MCF 10A (cell line): ENCODE measurements at regions of chr5 and their contacts with region 1.

Region 1: DNA sequence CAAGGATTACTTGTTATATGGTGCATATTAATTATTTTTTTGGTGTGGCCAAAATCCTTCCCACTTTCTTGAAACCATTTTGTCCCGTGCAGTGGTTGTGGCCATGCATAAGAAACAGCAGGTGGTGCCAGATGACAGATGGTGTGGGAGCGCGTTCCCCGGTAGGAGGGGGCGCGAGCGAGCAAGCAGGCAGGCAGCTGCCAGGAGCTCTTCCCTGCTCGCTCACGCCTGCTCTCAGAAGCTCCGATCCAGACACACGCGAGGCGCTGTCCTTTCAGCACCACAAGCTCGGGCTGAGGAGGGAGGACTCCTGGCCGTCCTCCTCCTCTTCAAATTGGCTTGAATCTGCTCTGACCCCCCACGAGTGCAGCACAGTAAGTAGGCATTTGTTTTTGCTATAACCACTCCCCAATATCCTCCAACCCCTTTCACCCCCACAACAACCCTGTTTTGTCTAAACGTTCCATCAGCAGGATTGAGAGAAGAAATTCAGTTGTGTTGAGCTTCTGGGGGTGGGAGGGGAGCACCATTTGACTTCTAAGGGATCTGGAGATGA is at the start of gene NSG2:
- DNase-seq: peak; percentile 96
- H3K4me3 Mint-ChIP-seq: no peak within 1 kb of the TSS
- H3K27ac Mint-ChIP-seq: no peak within 1 kb of the TSS
- H3K4me1 Mint-ChIP-seq: no peaks in the 10 kb centered on the region
- H3K27me3 Mint-ChIP-seq: peaks cover 42% of the 10 kb centered on the region
- CTCF ChIP-seq: peak; percentile 99
- total RNA-seq, gene NSG2: not detected in 2 replicates

Region 2: GRCh38 chr5:173868076-173868880 is 177.3 kb before region 1 on chr5:
- CTCF ChIA-PET with region 1: no interaction called
- POLR2A ChIA-PET with region 1: no interaction called
- intact Hi-C with region 1: no loop called
- DNase-seq: peak; percentile 19
- H3K4me3 Mint-ChIP-seq: no peak overlapping the region
- H3K27ac Mint-ChIP-seq: no peak overlapping the region
- H3K4me1 Mint-ChIP-seq: peaks cover 7% of the 10 kb centered on the region
- H3K27me3 Mint-ChIP-seq: no peaks in the 10 kb centered on the region
- CTCF ChIP-seq: no peak

Region 3: GRCh38 chr5:173997331-173997730 is 48.2 kb before region 1 on chr5:
- CTCF ChIA-PET with region 1: no interaction called
- POLR2A ChIA-PET with region 1: no interaction called
- intact Hi-C with region 1: no loop called
- DNase-seq: no peak
- H3K4me3 Mint-ChIP-seq: no peak overlapping the region
- H3K27ac Mint-ChIP-seq: no peak overlapping the region
- H3K4me1 Mint-ChIP-seq: no peaks in the 10 kb centered on the region
- H3K27me3 Mint-ChIP-seq: peaks cover 36% of the 10 kb centered on the region
- CTCF ChIP-seq: no peak

Region 4: DNA sequence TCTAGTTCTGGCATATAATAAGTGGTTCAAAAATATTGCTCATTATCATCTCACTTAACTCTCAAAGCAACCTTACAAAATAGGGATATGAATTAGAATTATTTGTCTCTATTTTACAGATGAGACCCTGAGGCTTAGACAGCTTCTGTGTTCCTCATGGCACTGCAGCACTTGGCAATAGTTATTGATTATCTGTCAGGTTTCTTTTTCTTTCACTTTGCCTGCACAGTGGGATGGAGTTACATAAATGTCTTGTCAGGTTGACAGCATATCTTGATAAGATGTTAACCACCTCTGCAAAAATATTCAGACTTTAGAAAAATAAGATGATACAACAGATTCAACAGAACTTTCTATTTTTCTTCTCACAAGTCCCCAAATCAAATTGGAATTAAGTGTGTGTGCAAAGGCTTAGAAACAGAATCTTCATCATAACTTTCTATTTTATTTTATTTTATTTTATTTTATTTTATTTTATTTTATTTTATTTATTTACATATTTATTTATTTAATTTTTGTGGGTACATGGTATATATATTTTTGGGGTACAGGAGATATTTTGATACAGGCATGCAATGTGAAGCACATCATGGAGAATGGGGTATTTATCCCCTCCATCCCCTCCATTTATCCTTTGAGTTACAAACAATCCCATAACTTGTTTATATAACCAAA is 17.7 kb after region 1 on chr5:
- CTCF ChIA-PET with region 1: interaction called, 12 read pairs
- POLR2A ChIA-PET with region 1: no interaction called
- intact Hi-C with region 1: no loop called
- DNase-seq: no peak
- H3K4me3 Mint-ChIP-seq: no peak overlapping the region
- H3K27ac Mint-ChIP-seq: no peak overlapping the region
- H3K4me1 Mint-ChIP-seq: no peaks in the 10 kb centered on the region
- H3K27me3 Mint-ChIP-seq: peaks cover 70% of the 10 kb centered on the region
- CTCF ChIP-seq: no peak

Region 5: GRCh38 chr5:174074369-174074768 is 28.8 kb after region 1 on chr5:
- CTCF ChIA-PET with region 1: interaction called, 21 read pairs
- POLR2A ChIA-PET with region 1: interaction called, 3 read pairs
- intact Hi-C with region 1: no loop called
- DNase-seq: no peak
- H3K4me3 Mint-ChIP-seq: no peak overlapping the region
- H3K27ac Mint-ChIP-seq: no peak overlapping the region
- H3K4me1 Mint-ChIP-seq: peaks cover 7% of the 10 kb centered on the region
- H3K27me3 Mint-ChIP-seq: no peaks in the 10 kb centered on the region
- CTCF ChIP-seq: no peak

Region 6: DNA sequence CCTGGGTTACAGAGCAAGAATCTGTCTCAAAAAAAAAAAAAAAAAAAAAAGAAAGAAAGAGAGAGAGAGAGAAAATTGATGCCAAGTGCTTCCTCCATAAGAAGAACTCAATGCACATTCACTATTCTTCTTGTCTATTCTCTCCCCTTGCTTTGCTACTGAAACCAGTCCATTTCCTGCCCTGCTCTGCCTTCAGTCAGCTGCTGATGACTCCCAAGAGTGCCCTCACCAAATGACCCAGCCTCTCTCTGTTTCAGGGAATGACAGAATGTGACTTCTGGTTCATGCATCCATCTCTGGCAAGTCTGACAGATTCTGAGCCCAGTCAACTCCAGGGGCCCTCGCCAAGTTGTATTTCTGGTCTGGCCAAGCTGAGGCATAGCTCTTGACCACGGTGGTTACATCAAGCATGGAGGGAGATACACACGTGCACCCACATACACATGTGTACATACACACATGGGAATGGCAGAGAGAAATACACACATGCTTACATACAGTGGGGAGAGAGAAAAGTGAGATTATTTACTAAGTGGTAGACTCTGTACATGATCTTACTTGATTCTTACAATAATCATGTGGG is 106.1 kb after region 1 on chr5:
- CTCF ChIA-PET with region 1: no interaction called
- POLR2A ChIA-PET with region 1: no interaction called
- intact Hi-C with region 1: no loop called
- DNase-seq: no peak
- H3K4me3 Mint-ChIP-seq: no peak overlapping the region
- H3K27ac Mint-ChIP-seq: no peak overlapping the region
- H3K4me1 Mint-ChIP-seq: peaks cover 13% of the 10 kb centered on the region
- H3K27me3 Mint-ChIP-seq: peaks cover 11% of the 10 kb centered on the region
- CTCF ChIP-seq: no peak

Region 7: GRCh38 chr5:174327317-174328236 is 282.0 kb after region 1 on chr5:
- CTCF ChIA-PET with region 1: interaction called, 27 read pairs
- POLR2A ChIA-PET with region 1: no interaction called
- intact Hi-C with region 1: no loop called
- DNase-seq: peak; percentile 88
- H3K4me3 Mint-ChIP-seq: no peak overlapping the region
- H3K27ac Mint-ChIP-seq: peak overlapping the region; percentile 96
- H3K4me1 Mint-ChIP-seq: peaks cover 25% of the 10 kb centered on the region
- H3K27me3 Mint-ChIP-seq: peaks cover 25% of the 10 kb centered on the region
- CTCF ChIP-seq: peak; percentile 98

Region 8: DNA sequence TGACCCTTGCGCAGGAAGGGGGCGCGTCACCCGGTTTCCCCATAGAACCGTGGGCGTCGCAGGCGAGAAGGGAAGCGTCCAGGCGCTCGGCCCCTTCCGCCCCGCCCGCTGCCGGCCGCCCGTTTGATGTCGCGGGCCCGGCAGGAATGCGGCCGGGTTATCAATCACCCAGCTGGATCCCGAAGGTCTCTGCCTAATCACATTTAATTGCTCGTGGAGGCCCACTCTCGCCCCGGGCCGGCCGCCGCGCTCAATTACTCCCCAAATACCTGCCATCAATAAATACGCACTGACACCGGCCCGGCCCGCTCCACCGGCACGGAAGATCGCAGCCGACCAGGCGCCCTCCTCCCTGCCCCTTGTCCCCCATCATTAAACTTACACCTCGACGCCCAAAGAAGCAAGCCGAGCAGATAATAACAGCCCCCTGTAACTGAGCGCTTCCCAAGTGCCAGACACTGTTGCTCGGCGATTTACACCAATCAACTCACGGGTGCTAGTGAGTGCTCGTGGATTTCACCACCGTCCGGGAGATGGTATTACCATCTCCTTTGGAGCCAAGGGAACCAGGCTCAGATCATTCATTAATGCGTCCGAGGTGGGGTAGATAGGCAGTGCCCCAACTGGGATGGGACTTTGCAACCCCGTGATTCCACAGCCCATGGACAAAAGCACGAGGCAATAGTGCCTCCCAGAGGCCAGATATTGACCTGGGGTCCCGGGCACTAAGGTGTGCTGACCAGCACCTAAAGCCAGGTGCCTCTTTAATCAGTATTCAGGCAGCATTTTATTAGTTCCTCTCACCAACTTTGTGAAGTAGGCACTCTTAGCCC is 690.2 kb after region 1 on chr5:
- CTCF ChIA-PET with region 1: no interaction called
- POLR2A ChIA-PET with region 1: no interaction called
- intact Hi-C with region 1: loop called (anchors 10 kb)
- DNase-seq: peak; percentile 63
- H3K4me3 Mint-ChIP-seq: peak overlapping the region; percentile 65
- H3K27ac Mint-ChIP-seq: no peak overlapping the region
- H3K4me1 Mint-ChIP-seq: peaks cover 20% of the 10 kb centered on the region
- H3K27me3 Mint-ChIP-seq: peaks cover 19% of the 10 kb centered on the region
- CTCF ChIP-seq: peak; percentile 74